ENCODE measurements at regions of chr3 and their contacts with region 1.

Region 1: GRCh38 chr3:70090322-70090913 is 90.9 kb downstream of the SAMMSON start:
- DNase-seq: peak; percentile 30
- H3K4me3 Mint-ChIP-seq: no peak overlapping the region
- H3K27ac Mint-ChIP-seq: no peak overlapping the region
- H3K4me1 Mint-ChIP-seq: no peaks in the 10 kb centered on the region
- H3K27me3 Mint-ChIP-seq: peaks cover 76% of the 10 kb centered on the region
- CTCF ChIP-seq: peak; percentile 67

Region 2: GRCh38 chr3:70020906-70021660 is 69.3 kb before region 1 on chr3:
- CTCF ChIA-PET with region 1: no interaction called
- POLR2A ChIA-PET with region 1: no interaction called
- intact Hi-C with region 1: no loop called
- DNase-seq: no peak
- H3K4me3 Mint-ChIP-seq: no peak overlapping the region
- H3K27ac Mint-ChIP-seq: no peak overlapping the region
- H3K4me1 Mint-ChIP-seq: no peaks in the 10 kb centered on the region
- H3K27me3 Mint-ChIP-seq: peaks cover 26% of the 10 kb centered on the region
- CTCF ChIP-seq: no peak

Region 3: DNA sequence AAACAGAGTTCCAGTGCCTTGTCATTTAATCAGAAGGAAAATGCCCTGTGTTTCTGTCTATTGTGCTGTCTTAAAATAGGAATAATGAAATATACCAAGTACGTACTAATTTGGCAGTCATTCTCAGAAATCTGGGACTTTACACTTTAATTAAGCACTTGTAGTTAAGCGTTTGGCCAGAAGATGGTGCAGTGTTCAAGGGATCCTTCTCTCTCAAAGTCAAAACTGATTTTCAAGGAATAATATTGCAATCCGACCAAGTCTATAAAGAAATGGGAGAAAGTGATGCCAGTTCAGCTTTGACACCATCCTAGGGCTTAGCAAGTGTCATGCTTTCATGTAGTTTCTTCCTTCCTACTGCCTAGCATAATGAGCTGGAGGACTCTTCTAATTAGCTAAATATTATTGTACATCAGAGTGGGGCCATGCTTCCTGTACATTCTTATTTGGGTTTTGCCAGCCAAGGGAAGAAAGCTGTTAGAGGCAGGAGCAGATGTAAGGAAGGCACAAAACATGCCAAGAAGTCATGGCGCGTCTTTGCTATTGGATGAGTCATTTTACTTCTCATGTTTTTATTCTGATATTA is 26.1 kb before region 1 on chr3:
- CTCF ChIA-PET with region 1: interaction called, 10 read pairs
- POLR2A ChIA-PET with region 1: no interaction called
- intact Hi-C with region 1: no loop called
- DNase-seq: peak; percentile 44
- H3K4me3 Mint-ChIP-seq: no peak overlapping the region
- H3K27ac Mint-ChIP-seq: no peak overlapping the region
- H3K4me1 Mint-ChIP-seq: no peaks in the 10 kb centered on the region
- H3K27me3 Mint-ChIP-seq: peaks cover 47% of the 10 kb centered on the region
- CTCF ChIP-seq: peak; percentile 61

Region 4: GRCh38 chr3:70108072-70108471 is 17.7 kb after region 1 on chr3:
- CTCF ChIA-PET with region 1: interaction called, 21 read pairs
- POLR2A ChIA-PET with region 1: no interaction called
- intact Hi-C with region 1: no loop called
- DNase-seq: peak; percentile 53
- H3K4me3 Mint-ChIP-seq: no peak overlapping the region
- H3K27ac Mint-ChIP-seq: no peak overlapping the region
- H3K4me1 Mint-ChIP-seq: no peaks in the 10 kb centered on the region
- H3K27me3 Mint-ChIP-seq: peaks cover 74% of the 10 kb centered on the region
- CTCF ChIP-seq: peak; percentile 31

Region 5: GRCh38 chr3:70120357-70121121 is 30.1 kb after region 1 on chr3:
- CTCF ChIA-PET with region 1: interaction called, 21 read pairs
- POLR2A ChIA-PET with region 1: no interaction called
- intact Hi-C with region 1: no loop called
- DNase-seq: peak; percentile 82
- H3K4me3 Mint-ChIP-seq: no peak overlapping the region
- H3K27ac Mint-ChIP-seq: no peak overlapping the region
- H3K4me1 Mint-ChIP-seq: no peaks in the 10 kb centered on the region
- H3K27me3 Mint-ChIP-seq: peaks cover 63% of the 10 kb centered on the region
- CTCF ChIP-seq: peak; percentile 73

Region 6: DNA sequence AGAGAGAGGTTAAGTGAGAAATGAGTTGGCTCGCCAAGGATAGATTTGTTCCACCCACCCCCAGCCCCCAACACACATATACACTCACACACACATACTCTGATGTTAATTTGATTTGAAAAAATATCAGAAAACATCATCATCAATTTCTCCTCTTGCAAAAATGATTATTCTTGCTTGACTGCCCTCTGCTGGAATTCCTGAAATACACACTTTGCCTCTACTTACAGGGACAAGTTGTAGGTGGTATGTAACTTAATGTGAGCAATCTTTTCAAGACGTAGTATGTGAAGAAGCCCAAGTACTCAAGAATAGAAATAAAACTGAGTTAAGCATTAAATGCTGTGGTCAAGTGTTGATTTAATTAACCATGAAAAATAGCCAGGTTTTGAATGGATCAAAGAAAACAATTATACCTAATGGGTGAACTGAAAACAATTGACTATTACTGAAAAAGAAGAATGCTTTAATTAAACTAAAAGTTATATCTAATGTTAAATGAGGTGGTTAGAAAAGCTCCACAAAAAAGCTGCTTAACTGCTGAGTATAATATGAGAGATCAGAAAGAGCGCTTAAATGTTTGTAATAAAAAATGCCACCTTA is 268.7 kb after region 1 on chr3:
- CTCF ChIA-PET with region 1: interaction called, 53 read pairs
- POLR2A ChIA-PET with region 1: no interaction called
- intact Hi-C with region 1: loop called (anchors 1 kb)
- DNase-seq: peak; percentile 37
- H3K4me3 Mint-ChIP-seq: no peak overlapping the region
- H3K27ac Mint-ChIP-seq: no peak overlapping the region
- H3K4me1 Mint-ChIP-seq: no peaks in the 10 kb centered on the region
- H3K27me3 Mint-ChIP-seq: peaks cover 74% of the 10 kb centered on the region
- CTCF ChIP-seq: peak; percentile 60

Region 7: GRCh38 chr3:70531063-70531657 is 440.7 kb after region 1 on chr3:
- CTCF ChIA-PET with region 1: no interaction called
- POLR2A ChIA-PET with region 1: no interaction called
- intact Hi-C with region 1: loop called (anchors 10 kb)
- DNase-seq: peak; percentile 38
- H3K4me3 Mint-ChIP-seq: no peak overlapping the region
- H3K27ac Mint-ChIP-seq: no peak overlapping the region
- H3K4me1 Mint-ChIP-seq: no peaks in the 10 kb centered on the region
- H3K27me3 Mint-ChIP-seq: peaks cover 98% of the 10 kb centered on the region
- CTCF ChIP-seq: peak; percentile 40

Measured in MCF 10A (cell line).